ENCODE measurements at regions of chr5 and their contacts with region 1.

Region 1: DNA sequence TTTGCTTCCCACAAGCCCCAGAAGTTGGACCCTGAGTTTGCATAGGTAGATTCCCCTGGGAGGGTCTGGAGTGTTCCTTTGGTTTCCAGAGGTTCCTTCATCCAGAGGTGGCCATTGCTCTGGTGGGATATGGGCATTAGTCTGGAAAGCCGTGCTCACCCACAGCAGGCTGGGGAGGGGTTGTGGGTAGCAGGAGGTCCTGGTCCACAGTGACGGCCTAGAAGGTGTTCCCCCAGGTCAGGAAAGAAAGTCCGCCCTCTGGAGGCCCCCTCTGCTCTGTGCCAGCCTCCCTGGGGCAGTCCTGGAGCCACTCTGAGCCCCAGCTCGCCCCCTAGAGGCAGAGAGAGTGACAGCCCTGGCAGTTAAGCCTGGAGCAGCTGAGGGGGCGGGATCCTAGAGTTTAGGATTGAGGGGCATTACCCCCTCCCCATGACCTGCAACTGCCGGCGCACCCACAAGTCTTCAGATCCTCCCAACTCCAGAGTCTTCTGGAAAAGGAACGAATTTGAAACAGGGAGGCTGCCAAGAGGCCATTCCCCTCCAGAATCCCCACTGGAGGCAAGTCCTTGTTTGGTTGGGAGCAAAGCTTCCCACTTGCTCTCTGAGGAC is 36.8 kb downstream of the NDST1 start:
- DNase-seq: peak; percentile 69
- H3K4me3 ChIP-seq: no peak overlapping the region
- H3K27ac ChIP-seq: no peak overlapping the region
- H3K4me1 ChIP-seq: peaks cover 20% of the 10 kb centered on the region
- H3K27me3 ChIP-seq: no peaks in the 10 kb centered on the region
- CTCF ChIP-seq: peak; percentile 95 to 97
- POLR2A ChIP-seq: no peak

Region 2: GRCh38 chr5:150272526-150272925 is 272.2 kb before region 1 on chr5:
- CTCF ChIA-PET with region 1: no interaction called
- POLR2A ChIA-PET with region 1: no interaction called
- dilution Hi-C with region 1: no loop called
- intact Hi-C with region 1: no loop called
- DNase-seq: peak; percentile 18
- H3K4me3 ChIP-seq: no peak overlapping the region
- H3K27ac ChIP-seq: no peak overlapping the region
- H3K4me1 ChIP-seq: no peaks in the 10 kb centered on the region
- H3K27me3 ChIP-seq: peaks cover 9 to 19% of the 10 kb centered on the region in 2 experiments
- CTCF ChIP-seq: peak in 1 of 2 donors; percentile 42
- POLR2A ChIP-seq: no peak

Region 3: GRCh38 chr5:150449517-150450339 is 95.0 kb before region 1 on chr5 and contains the start of gene RPS14:
- CTCF ChIA-PET with region 1: interaction called, 11 read pairs
- POLR2A ChIA-PET with region 1: no interaction called
- dilution Hi-C with region 1: no loop called
- intact Hi-C with region 1: no loop called
- DNase-seq: peak; percentile 97
- H3K4me3 ChIP-seq: peak within 1 kb of the TSS; percentile 86 to 93 (median 88)
- H3K27ac ChIP-seq: peak within 1 kb of the TSS; percentile 98
- H3K4me1 ChIP-seq: peaks cover 16% of the 10 kb centered on the region
- H3K27me3 ChIP-seq: no peaks in the 10 kb centered on the region
- CTCF ChIP-seq: peak; percentile 82 to 87
- POLR2A ChIP-seq: peak; percentile 90
- total RNA-seq, gene RPS14: 1,852 and 2,034 TPM in 2 replicates

Region 4: DNA sequence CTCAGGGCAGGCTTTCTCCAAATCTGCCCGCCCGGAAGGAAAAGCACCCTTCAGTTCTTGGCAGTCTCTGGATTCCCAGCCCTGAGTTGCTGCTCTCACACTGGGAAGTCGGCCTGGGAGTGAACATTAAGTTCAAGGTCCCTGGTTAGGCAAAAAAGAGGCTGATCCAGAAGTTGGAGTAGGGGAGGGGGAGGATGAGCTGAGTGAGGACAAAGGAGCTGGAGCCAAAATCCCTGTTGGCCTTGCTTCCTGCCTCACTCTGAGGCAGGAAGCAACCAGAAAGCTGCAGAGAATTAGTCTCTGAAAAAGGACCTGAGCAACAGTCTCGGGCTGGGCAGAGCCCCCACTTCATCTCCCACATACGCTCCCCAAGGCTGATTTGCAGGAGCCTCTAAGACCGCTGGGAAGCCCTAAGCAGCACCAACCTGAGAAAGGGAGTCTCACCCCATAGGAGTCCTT is 80.1 kb before region 1 on chr5:
- CTCF ChIA-PET with region 1: interaction called, 168 read pairs
- POLR2A ChIA-PET with region 1: no interaction called
- dilution Hi-C with region 1: no loop called
- intact Hi-C with region 1: no loop called
- DNase-seq: peak; percentile 28
- H3K4me3 ChIP-seq: no peak overlapping the region
- H3K27ac ChIP-seq: no peak overlapping the region
- H3K4me1 ChIP-seq: peaks cover 21% of the 10 kb centered on the region
- H3K27me3 ChIP-seq: no peaks in the 10 kb centered on the region
- CTCF ChIP-seq: no peak
- POLR2A ChIP-seq: no peak

Measured in endothelial cell of umbilical vein (primary cell).